HEK293 (cell line): ENCODE measurements at regions of chr18 and their contacts with region 1.

Region 1: DNA sequence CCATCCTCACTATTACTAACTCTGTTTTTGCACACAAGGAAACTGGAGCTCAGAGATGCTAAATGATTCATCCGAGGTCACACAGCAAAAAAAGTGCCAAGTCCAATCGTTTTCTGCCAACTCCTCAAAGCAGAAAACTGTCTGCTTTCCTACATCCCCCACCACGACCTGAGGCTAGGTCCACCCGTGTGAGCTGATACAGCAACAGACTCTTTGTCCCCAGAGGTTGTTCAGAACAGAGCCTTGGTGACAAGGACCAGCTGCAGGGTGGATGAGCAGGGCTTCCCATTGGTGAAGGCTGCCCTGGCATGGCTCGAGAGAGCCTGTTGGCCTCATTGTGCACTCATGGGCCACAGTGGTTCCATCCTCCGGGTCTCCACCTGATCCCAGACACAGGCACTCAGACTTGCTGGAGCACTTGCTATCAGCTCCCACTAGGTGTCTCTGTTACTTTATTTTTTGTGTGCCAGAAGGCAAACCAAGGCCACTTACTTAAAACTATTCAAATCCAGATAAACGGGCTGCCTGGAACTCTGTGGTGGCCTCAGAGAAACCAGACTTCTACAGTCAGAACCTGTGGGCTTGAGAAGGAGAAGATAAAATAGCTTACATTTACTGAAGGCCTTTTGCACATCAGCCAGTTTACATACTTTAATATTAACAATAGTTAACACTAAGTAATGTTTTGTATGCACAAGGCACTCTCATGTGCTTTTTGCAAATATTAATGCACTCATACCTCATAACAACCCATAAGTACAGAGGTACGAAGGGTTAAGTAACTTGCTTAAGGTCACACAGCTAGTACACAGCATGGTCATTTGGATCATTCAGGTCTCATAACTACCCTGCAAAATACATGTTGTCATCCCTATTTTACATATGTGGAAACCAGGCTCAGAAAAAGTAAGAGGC is 62.9 kb upstream of the CTIF start:
- H3K4me3 ChIP-seq: no peak overlapping the region
- H3K27ac ChIP-seq: no peak overlapping the region
- H3K4me1 ChIP-seq: no peaks in the 10 kb centered on the region
- CTCF ChIP-seq: peak; percentile 73

Region 2: DNA sequence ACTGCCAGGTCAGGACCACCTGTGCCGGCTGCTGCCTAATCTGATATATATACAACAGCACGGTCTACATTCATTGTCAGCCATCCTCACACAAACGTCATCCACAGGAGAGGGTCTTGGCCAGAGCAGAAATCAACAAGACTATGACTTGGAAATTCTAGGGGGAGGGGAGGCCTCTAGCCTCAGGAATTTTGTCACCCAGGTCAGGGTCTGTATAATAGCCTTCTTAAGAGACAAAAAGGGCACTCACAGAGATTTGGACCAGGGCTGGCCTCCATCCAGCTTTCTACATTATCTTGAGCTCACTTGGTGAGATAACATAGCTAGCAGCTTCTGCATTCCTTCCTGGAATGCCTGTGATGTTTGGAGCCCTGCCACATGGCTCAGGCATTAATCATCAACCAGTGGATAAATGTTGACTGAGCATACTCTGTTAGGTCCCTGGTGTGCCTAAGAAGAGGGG is 12.5 kb after region 1 on chr18:
- CTCF ChIA-PET with region 1: interaction called, 59 read pairs
- POLR2A ChIA-PET with region 1: no interaction called
- H3K4me3 ChIP-seq: no peak overlapping the region
- H3K27ac ChIP-seq: no peak overlapping the region
- H3K4me1 ChIP-seq: peaks cover 12% of the 10 kb centered on the region
- CTCF ChIP-seq: no peak

Region 3: DNA sequence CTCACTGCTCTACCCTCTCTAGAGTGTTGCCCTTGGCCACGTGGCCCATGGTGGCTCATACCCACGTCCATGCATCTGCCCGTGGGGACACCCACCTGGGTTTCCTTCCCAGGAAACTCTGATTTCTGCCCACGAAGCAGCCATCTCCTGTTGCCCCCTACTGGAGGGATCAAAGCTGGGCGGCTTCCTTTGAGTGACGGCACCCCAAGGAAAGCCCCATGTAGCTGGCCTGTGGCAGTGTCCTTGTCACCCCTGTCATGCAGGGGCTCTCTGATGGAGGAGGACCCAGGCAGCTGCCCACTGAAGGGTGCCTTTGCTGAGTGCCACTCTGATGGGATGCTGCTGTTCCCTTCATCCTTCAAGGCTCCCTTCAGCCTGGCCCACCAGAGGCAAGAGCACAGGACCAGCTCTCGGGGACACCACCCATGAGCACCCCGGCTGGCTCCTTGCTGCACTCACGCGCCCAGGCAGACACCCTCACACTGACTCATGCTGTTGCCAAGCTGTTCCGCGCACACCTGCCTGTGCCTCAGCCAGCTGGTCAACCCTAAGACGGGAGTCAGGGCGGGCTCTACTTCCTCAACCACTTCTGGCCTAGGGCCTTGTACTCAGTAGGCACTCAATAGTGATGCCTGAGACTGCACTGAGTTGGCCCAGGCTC is 164.0 kb after region 1 on chr18:
- CTCF ChIA-PET with region 1: interaction called, 24 read pairs
- POLR2A ChIA-PET with region 1: no interaction called
- H3K4me3 ChIP-seq: no peak overlapping the region
- H3K27ac ChIP-seq: no peak overlapping the region
- H3K4me1 ChIP-seq: no peaks in the 10 kb centered on the region
- CTCF ChIP-seq: no peak

Region 4: DNA sequence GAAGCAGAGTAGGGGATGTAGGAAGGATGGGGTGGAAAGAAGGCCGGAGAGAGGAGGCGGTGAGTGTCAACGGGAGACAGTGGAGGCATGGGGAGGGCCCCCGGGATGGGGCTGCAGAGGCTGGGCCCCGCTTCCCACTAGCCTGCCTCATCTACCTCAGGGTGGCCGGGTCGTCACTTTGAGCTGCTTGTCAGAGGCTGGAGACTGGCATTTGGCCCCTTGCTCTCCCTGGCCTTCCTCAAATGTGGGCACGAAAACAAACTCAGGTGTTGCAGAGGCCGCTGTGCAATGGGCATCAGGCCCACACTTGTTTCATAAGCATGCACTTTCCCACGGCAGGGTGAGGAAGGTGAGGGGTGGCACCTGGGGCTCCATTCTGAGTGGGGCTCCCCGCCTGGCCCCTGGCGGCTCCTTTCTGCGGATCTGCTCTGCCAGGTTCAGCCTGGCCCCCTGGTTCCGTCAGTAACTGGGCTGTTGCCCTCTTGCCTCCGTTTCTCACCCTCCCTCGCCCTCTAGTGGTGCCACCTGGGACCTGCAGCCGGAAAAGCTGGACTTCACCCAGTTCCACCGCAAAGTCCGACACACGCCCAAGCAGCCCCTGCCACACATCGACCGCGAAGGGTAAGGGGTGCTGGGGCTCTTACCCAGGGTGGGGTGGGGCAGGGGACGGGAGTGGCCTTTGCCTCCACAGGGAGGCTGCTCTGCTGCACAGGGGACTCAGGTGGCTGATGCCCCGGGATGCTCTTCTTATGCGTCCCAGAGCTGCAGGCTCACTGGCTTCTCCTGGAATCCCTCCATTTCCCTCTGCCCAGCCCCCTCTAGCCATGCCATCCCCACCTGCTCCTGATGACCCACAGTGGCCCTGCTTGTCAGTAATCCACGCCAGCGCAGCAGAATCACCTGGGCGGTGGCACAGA is 188.3 kb after region 1 on chr18:
- CTCF ChIA-PET with region 1: interaction called, 71 read pairs
- POLR2A ChIA-PET with region 1: no interaction called
- H3K4me3 ChIP-seq: no peak overlapping the region
- H3K27ac ChIP-seq: no peak overlapping the region
- H3K4me1 ChIP-seq: peaks cover 14% of the 10 kb centered on the region
- CTCF ChIP-seq: peak; percentile 95

Region 5: GRCh38 chr18:48728204-48728833 is 252.4 kb after region 1 on chr18:
- CTCF ChIA-PET with region 1: no interaction called
- POLR2A ChIA-PET with region 1: no interaction called
- H3K4me3 ChIP-seq: no peak overlapping the region
- H3K27ac ChIP-seq: no peak overlapping the region
- H3K4me1 ChIP-seq: no peaks in the 10 kb centered on the region
- CTCF ChIP-seq: no peak

Region 6: GRCh38 chr18:49238433-49239042 is 762.6 kb after region 1 on chr18:
- CTCF ChIA-PET with region 1: interaction called, 10 read pairs
- POLR2A ChIA-PET with region 1: no interaction called
- H3K4me3 ChIP-seq: no peak overlapping the region
- H3K27ac ChIP-seq: no peak overlapping the region
- H3K4me1 ChIP-seq: no peaks in the 10 kb centered on the region
- CTCF ChIP-seq: peak; percentile 50